Left ventricle myocardium superior (tissue), 1 donor: ENCODE measurements at regions of chr12 and their contacts with region 1.

Region 1: GRCh38 chr12:39272871-39273770 is 169.8 kb downstream of the KIF21A start:
- DNase-seq: no peak
- ATAC-seq: no peak

Region 2: GRCh38 chr12:38324896-38325295 is 948.2 kb before region 1 on chr12:
- intact Hi-C with region 1: loop called (anchors 10 kb)
- DNase-seq: no peak
- ATAC-seq: no peak

Region 3: DNA sequence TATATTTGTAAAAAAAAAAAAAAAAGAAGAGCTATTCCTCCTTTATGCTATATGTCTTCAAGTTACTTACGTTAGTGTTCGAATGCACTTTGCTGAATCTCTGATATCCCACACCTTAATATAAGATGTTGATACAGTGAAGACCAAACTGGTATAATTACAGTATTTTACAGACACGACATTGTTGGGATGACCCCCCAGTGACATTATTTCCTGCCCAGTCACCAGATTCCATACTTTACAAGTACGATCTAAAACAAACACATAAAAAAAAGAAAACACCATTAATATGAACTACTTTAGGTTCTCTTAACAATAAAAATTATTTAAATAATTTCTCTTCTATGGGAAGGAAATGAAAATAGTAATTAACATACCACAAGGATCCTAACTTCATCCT is 36.4 kb after region 1 on chr12:
- intact Hi-C with region 1: no loop called
- DNase-seq: no peak
- ATAC-seq: no peak